ENCODE measurements at regions of chr3 and their contacts with region 1.

Region 1: DNA sequence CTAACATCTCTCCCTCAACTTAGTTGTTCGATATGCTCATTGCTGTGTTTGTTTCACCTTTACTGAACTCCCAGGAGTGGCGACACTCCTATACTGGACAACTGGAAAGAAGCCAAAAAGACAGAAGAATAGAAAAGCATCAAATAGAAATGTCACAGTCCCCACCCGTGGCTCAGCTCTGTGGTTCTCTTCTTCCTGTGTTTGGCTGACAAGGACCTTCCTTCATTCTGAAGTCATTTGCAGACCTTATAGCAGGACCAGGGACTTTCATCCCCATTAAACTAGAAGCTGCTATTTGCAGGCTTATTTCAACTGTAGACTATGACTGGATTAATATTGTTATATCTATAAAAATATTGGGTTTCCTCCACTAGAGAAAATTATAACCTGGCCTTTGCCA is 125.9 kb downstream of the NECTIN3 start:
- DNase-seq: no peak
- H3K4me3 ChIP-seq: no peak overlapping the region
- H3K27ac ChIP-seq: no peak overlapping the region
- H3K4me1 ChIP-seq: no peaks in the 10 kb centered on the region
- H3K27me3 ChIP-seq: no peaks in the 10 kb centered on the region
- CTCF ChIP-seq: no peak

Region 2: GRCh38 chr3:110932567-110932966 is 264.9 kb before region 1 on chr3:
- CTCF ChIA-PET with region 1: no interaction called
- dilution Hi-C with region 1: no loop called
- in situ Hi-C with region 1: no loop called
- intact Hi-C with region 1: no loop called
- DNase-seq: no peak
- H3K4me3 ChIP-seq: no peak overlapping the region
- H3K27ac ChIP-seq: no peak overlapping the region
- H3K4me1 ChIP-seq: no peaks in the 10 kb centered on the region
- H3K27me3 ChIP-seq: peaks cover 2% of the 10 kb centered on the region
- CTCF ChIP-seq: no peak

Region 3: GRCh38 chr3:111269777-111270176 is 72.3 kb after region 1 on chr3:
- CTCF ChIA-PET with region 1: no interaction called
- dilution Hi-C with region 1: loop called (anchors 5 kb)
- in situ Hi-C with region 1: no loop called
- intact Hi-C with region 1: no loop called
- DNase-seq: no peak
- H3K4me3 ChIP-seq: no peak overlapping the region
- H3K27ac ChIP-seq: no peak overlapping the region
- H3K4me1 ChIP-seq: no peaks in the 10 kb centered on the region
- H3K27me3 ChIP-seq: no peaks in the 10 kb centered on the region
- CTCF ChIP-seq: no peak

Region 4: GRCh38 chr3:111414531-111414930 is 217.0 kb after region 1 on chr3:
- CTCF ChIA-PET with region 1: no interaction called
- dilution Hi-C with region 1: no loop called
- in situ Hi-C with region 1: no loop called
- intact Hi-C with region 1: no loop called
- DNase-seq: no peak
- H3K4me3 ChIP-seq: no peak overlapping the region
- H3K27ac ChIP-seq: no peak overlapping the region
- H3K4me1 ChIP-seq: no peaks in the 10 kb centered on the region
- H3K27me3 ChIP-seq: no peaks in the 10 kb centered on the region
- CTCF ChIP-seq: no peak

Measured in mammary epithelial cell (primary cell).